CD14-positive monocyte (primary cell): ENCODE measurements at regions of chr12 and their contacts with region 1.

Region 1: DNA sequence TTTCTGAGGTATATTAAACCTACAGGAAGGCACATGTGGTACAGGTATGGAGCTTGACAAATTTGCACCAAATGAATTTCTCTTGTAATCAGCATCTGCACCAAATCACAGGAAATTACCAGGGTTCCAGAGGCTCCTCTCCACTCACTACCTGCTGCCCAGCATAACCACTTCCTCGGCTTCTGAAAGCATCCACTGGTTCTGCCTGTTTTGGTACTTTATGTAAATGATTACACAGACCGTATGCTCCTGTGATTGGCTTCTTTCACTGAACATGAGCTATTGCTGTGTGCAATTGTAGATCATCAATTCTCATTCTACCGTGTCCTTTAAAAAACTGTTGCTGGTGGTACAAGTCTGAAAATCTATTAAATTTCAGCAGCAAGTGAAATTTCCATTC is 522.1 kb downstream of the TMEM132D start:
- DNase-seq: no peak
- H3K4me3 ChIP-seq: no peak overlapping the region
- H3K4me3 Mint-ChIP-seq: no peak overlapping the region
- H3K27ac ChIP-seq: no peak overlapping the region
- H3K27ac Mint-ChIP-seq: no peak overlapping the region
- H3K4me1 ChIP-seq: no peaks in the 10 kb centered on the region
- H3K4me1 Mint-ChIP-seq: no peaks in the 10 kb centered on the region
- H3K27me3 ChIP-seq: no peaks in the 10 kb centered on the region
- H3K27me3 Mint-ChIP-seq: no peaks in the 10 kb centered on the region
- CTCF ChIP-seq: no peak

Region 2: DNA sequence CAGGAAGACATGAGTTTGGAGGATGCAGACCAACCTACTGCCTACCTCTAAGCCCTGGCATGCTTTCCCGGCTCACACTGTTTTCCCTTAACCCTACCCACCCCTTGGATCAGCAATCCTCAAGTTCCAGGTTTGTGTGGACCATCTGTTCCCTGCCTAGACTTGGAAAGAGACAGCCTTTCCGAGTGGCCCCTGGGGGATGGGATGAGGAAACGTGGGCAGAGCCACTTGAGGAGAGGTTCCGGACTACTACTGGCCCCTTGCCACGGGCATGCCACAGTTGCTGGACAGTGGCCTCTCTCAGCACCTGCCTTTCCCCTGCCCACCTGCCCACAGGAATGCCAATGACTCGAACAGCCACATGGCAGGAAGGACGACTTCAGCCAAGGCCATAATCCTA is 693.9 kb before region 1 on chr12:
- intact Hi-C with region 1: loop called in 1 of 2 experiments (anchors 5 kb)
- DNase-seq: no peak
- H3K4me3 ChIP-seq: no peak overlapping the region
- H3K4me3 Mint-ChIP-seq: no peak overlapping the region
- H3K27ac ChIP-seq: no peak overlapping the region
- H3K27ac Mint-ChIP-seq: no peak overlapping the region
- H3K4me1 ChIP-seq: no peaks in the 10 kb centered on the region
- H3K4me1 Mint-ChIP-seq: no peaks in the 10 kb centered on the region
- H3K27me3 ChIP-seq: no peaks in the 10 kb centered on the region
- H3K27me3 Mint-ChIP-seq: peaks cover 1 to 3% (median 2%) of the 10 kb centered on the region in 3 donors
- CTCF ChIP-seq: no peak